AG04449 (cell line): ENCODE measurements at regions of chr5 and their contacts with region 1.

Region 1: GRCh38 chr5:36377192-36377591 is 75.5 kb upstream of the RANBP3L start:
- DNase-seq: no peak
- H3K4me3 ChIP-seq: no peak overlapping the region
- CTCF ChIP-seq: no peak

Region 2: GRCh38 chr5:36389245-36389644 is 12.1 kb after region 1 on chr5:
- CTCF ChIA-PET with region 1: interaction called, 13 read pairs
- POLR2A ChIA-PET with region 1: no interaction called
- DNase-seq: no peak
- H3K4me3 ChIP-seq: no peak overlapping the region
- CTCF ChIP-seq: no peak